HepG2 (cell line): ENCODE measurements at regions of chr5 and their contacts with region 1.

Region 1: DNA sequence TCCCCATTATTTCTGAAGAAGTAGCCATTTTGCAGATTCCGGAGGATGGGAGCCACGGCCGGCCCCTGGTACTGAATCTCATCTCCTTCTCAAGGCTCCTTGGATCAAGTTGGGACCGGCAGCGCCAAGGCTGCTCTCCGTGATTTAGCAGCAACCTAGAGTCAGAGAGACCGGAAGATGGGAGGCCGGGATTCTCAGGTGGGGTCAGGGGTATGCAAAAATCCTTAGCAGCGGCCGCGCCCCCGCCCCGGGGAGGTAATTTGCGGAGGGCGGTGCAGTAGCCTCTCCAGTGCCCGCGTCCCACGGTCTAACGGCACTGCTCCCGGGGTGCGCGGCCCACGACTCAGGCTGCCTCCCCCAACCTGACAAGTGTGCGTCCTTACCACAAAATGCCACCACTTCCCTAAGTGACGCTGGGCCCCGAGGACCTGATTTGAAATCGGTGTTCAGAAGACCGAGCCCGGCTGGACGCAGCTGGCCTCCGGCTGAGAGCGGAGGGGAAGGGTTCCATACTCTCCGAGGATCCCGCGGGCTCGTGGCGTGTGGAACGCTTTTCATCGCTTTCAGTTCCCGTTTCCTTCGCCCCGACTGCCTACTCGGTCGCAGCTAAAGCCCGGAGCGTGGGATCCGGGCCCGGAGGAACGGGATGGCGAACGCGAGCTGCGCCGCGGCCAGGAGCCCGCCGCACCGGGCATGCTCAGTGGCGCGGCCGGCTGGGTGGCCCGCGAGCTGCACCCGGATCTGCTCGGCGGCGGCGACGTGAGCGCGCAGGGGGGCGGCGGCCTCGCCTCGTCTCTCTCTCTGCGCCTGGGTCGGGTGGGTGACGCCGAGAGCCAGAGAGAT is at the start of gene SCAMP1:
- DNase-seq: peak; percentile 77
- ATAC-seq: peak; percentile 97
- H3K4me3 ChIP-seq: peak within 1 kb of the TSS; percentile 93 to 99 (median 96)
- H3K27ac ChIP-seq: peak within 1 kb of the TSS; percentile 86
- H3K4me1 ChIP-seq: peaks cover 32% of the 10 kb centered on the region
- H3K27me3 ChIP-seq: no peaks in the 10 kb centered on the region; a peak in 1 of 5 replicates
- CTCF ChIP-seq: peak; percentile 51; the same call in 1 of the 2 replicates
- EP300 ChIP-seq: peak in 1 of 2 experiments; percentile 22; a peak in 1 of 4 replicates
- POLR2A ChIP-seq: peak; percentile 76 to 85
- RAD21 ChIP-seq: peak; percentile 50; the same call in 1 of the 2 replicates
- total RNA-seq, gene SCAMP1: 27.0 and 33.7 TPM in 2 replicates

Region 2: DNA sequence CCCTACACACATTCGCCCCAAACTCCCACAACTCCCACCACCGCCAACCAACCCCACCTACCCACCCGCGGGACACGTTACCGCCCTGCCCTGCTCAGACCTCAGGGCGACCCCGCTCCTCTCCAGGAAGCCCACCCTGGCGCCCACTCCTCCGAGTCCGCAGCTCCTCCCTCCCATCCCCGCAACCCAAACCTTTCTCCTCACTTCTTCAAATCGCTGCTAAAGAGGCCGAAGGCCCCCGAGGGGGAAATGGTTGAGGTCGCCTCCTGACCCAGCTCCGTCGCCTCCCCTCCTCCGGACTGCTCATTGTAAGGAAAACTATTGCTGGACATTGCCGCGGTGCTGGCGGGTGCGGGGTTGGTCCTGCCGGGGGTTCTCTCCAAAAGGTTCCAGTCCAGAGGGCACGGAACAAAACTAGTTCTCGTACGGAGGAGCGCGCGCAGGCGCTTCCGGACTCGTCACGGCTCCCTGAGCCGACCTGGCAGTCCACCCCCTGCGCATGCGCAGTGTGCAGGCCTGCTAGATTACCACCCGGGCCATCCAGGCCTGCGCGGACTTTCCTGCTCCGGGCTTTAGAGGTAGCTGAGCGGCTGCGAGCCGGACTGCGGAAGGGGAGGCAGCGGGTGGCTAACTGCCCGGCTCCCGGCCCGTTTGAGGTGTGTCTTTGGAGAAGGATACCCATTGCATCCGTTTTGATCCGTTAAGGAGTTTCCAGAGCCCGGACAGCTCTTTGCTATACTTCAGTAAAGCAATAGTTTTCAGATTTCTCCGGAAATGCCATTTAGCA is 65.6 kb before region 1 on chr5 and contains the start of gene AP3B1:
- CTCF ChIA-PET with region 1: no interaction called
- POLR2A ChIA-PET with region 1: interaction called, 39 read pairs
- in situ Hi-C with region 1: loop called (anchors 5 kb)
- intact Hi-C with region 1: loop called (anchors 1 kb)
- DNase-seq: peak; percentile 97
- ATAC-seq: peak; percentile 93
- H3K4me3 ChIP-seq: peak within 1 kb of the TSS; percentile 80 to 99 (median 98)
- H3K27ac ChIP-seq: peak within 1 kb of the TSS; percentile 94
- H3K4me1 ChIP-seq: peaks cover 30% of the 10 kb centered on the region
- H3K27me3 ChIP-seq: no peaks in the 10 kb centered on the region; a peak in 1 of 5 replicates
- CTCF ChIP-seq: peak; percentile 20; the same call in 1 of the 2 replicates
- EP300 ChIP-seq: peak in 1 of 2 experiments; percentile 20; a peak in 1 of 4 replicates
- POLR2A ChIP-seq: peak; percentile 91 to 93
- RAD21 ChIP-seq: 0 out of 2 replicates have a peak, but pooled peaks have one; percentile 33
- total RNA-seq, gene AP3B1: 51.2 and 83.8 TPM in 2 replicates

Region 3: GRCh38 chr5:78320401-78320800 is 39.7 kb before region 1 on chr5:
- CTCF ChIA-PET with region 1: no interaction called
- POLR2A ChIA-PET with region 1: no interaction called
- in situ Hi-C with region 1: no loop called
- intact Hi-C with region 1: loop called (anchors 2 kb)
- DNase-seq: peak; percentile 15
- ATAC-seq: no peak
- H3K4me3 ChIP-seq: no peak overlapping the region
- H3K27ac ChIP-seq: no peak overlapping the region
- H3K4me1 ChIP-seq: no peaks in the 10 kb centered on the region
- H3K27me3 ChIP-seq: no peaks in the 10 kb centered on the region
- CTCF ChIP-seq: peak; percentile 55
- EP300 ChIP-seq: no peak
- POLR2A ChIP-seq: no peak
- RAD21 ChIP-seq: no peak